ENCODE measurements at regions of chr10 and their contacts with region 1.

Region 1: DNA sequence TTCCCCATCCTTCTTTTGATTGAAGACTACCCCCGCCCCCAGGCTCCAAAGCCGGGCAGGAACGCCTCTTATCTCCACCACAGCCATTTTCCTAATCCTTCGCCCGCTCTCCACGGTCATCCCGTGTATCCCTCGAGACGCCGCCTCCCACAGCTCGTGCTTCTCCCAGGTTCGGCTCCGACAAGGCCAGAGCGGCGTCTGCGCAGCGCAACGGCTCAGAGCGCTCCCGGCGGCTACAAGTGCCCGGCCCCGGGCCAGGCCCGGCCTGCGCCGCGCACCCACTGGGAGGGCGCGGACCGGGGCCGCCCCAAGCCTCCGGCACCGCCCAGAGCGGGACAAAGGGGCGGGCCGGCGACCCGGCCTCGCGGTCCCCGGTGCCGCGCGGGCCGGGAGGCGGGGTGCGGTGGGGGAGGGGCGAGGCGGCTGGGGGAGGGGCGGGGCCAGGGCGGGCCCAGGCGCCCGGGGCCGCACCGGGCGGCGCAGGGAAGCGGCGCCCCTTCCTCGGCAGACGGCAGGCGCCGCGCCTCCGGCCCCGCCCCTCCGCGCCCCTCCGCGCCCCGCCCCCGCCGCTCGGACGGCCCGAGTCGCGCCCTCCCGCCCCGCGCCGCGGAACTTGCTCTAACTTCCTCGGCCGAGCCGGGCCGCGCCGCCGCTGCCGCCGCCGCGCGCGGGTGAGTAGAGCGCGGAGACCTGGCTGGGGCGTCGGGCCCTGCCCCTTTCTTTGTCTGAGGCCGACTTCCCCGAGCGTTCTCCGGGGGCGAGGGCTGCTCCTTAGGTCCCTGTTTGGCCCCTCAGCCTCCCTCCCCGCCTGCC is at the start of gene TSPAN14:
- DNase-seq: peak; percentile 81
- ATAC-seq: peak; percentile 76
- H3K4me3 Mint-ChIP-seq: peak within 1 kb of the TSS; percentile 92
- H3K27ac Mint-ChIP-seq: peak within 1 kb of the TSS; percentile 94
- H3K4me1 Mint-ChIP-seq: peaks cover 37% of the 10 kb centered on the region
- H3K27me3 Mint-ChIP-seq: no peaks in the 10 kb centered on the region
- total RNA-seq, gene TSPAN14: 100 to 104 TPM

Region 2: DNA sequence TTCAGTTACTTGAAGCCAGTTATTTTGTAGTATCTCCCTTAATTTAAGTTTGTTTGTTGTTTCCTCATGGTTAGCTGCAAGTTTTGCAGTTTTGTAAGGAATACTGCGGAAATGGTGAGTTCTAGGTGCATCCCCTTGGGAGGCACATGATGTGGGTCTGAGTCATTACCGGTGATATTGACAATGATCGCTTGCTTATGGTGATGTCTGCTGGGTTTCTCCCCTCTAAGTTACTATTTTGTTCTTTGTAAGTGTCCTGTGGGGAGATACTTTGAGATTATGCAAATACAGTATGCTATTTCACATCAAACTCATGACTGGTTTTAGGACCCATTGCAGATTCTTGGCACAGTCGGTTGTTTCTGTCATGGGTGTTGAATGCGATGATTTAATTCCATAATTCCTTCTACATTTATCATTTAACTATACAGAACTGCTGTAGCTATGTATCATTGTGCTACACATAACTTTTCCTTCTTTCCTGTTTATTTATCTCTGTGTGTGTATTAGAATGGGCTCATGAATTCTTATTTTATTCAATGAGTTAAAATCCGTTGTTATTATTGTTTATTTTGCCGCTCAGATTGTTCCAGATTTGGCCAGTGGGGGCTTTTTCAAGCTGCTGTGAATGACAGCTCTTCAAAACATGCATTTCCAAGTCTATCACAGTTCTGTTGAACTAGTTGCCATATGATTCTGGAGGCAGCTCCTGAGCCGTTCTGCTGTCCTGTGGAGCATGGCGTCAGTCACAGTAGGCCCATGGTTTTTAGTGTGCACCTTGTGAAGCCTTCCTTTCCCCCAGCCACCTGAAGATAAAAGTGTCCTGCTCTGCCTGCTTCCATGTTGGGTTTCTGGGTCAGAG is 18.6 kb after region 1 on chr10:
- CTCF ChIA-PET with region 1: interaction called, 77 read pairs
- DNase-seq: peak; percentile 66
- ATAC-seq: peak; percentile 65
- H3K4me3 Mint-ChIP-seq: peak overlapping the region; percentile 2
- H3K27ac Mint-ChIP-seq: peak overlapping the region; percentile 78
- H3K4me1 Mint-ChIP-seq: peaks cover 82% of the 10 kb centered on the region
- H3K27me3 Mint-ChIP-seq: no peaks in the 10 kb centered on the region

Region 3: GRCh38 chr10:80498833-80499741 is 45.2 kb after region 1 on chr10:
- CTCF ChIA-PET with region 1: interaction called, 579 read pairs
- DNase-seq: peak; percentile 77
- ATAC-seq: peak; percentile 82
- H3K4me3 Mint-ChIP-seq: peak overlapping the region; percentile 17
- H3K27ac Mint-ChIP-seq: peak overlapping the region; percentile 83
- H3K4me1 Mint-ChIP-seq: peaks cover 94% of the 10 kb centered on the region
- H3K27me3 Mint-ChIP-seq: no peaks in the 10 kb centered on the region

Measured in activated CD8-positive, alpha-beta memory T cell treated with anti-CD3 and anti-CD28 coated beads, Interleukin-2, amount 10 ng/mL, durations not matched to agents 7 days and 5 days (primary cell).